ENCODE measurements at regions of chr1 and their contacts with region 1.

Region 1: DNA sequence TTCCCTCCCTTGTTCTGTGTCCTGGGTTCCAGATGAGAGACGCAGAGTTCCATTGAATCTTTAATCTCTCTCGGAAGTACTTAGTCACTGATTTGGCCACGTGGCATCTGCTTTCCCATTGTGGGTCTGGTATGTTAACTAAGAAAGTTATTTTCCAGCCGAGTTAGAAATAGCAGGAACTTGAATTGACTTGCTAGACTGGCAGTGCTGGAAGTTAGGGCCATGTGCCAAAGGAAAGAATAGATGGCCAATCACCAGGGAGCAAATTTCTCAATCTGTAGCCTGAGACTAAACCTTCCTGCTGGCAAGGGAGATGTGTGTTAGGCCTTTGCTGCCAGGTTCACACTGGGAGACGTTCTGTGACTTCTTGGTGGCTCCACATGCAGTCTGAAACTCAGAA is 24.2 kb upstream of the SLFNL1 start:
- DNase-seq: peak; percentile 57 to 94
- H3K4me3 ChIP-seq: no peak overlapping the region
- H3K27ac ChIP-seq: peak overlapping the region; percentile 76 to 88
- H3K4me1 ChIP-seq: peaks cover 6 to 35% of the 10 kb centered on the region in 2 donors
- H3K27me3 ChIP-seq: no peaks in the 10 kb centered on the region
- CTCF ChIP-seq: no peak

Region 2: GRCh38 chr1:40979233-40980067 is 66.3 kb before region 1 on chr1 and contains the start of gene CTPS1:
- intact Hi-C with region 1: loop called (anchors 5 kb)
- DNase-seq: peak; percentile 71 to 96
- H3K4me3 ChIP-seq: peak within 1 kb of the TSS; percentile 78 to 83
- H3K27ac ChIP-seq: peak within 1 kb of the TSS; percentile 96 to 98
- H3K4me1 ChIP-seq: peaks cover 7 to 30% of the 10 kb centered on the region in 2 donors
- H3K27me3 ChIP-seq: no peaks in the 10 kb centered on the region
- CTCF ChIP-seq: peak in 1 of 3 experiments; percentile 21
- total RNA-seq, gene CTPS1: 33.0 TPM

Region 3: DNA sequence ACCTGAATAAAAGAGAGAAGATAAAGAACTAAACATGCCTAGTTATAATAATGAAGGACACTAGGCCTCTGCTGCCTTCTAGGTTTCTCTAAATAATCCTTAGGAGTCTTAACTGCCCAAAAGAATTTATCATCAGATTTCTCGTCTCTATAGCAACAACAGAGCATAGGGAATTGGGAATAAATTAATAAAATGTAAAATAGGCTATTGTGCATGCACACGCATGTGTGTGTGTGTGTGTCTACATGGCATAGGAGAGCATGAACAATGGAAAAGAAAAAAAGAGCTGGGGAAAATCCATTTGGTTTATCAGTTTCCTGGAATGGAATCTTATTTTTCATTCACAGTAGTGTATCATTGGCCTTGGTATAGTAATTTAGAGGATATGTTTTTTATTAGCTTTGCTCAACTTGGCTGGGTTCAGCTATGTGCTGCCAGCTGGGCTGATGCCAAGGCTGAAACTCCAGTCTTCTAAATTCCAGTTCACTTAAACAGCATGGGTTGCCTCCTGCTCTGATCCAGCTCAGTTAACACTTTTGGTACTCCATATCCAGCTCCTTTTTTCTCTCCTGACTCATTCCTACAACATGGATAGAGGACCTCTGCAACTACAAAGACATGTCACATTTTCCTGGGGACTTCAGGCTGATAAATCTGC is 56.3 kb after region 1 on chr1:
- intact Hi-C with region 1: loop called (anchors 2 kb)
- DNase-seq: peak; percentile 18 to 96
- H3K4me3 ChIP-seq: no peak overlapping the region
- H3K27ac ChIP-seq: peak overlapping the region; percentile 46 to 69
- H3K4me1 ChIP-seq: peaks cover 18 to 39% of the 10 kb centered on the region in 2 donors
- H3K27me3 ChIP-seq: no peaks in the 10 kb centered on the region
- CTCF ChIP-seq: no peak

Region 4: GRCh38 chr1:41241782-41242341 is 196.1 kb after region 1 on chr1 and contains the start of gene SCMH1:
- intact Hi-C with region 1: loop called (anchors 2 kb)
- DNase-seq: peak in 1 of 2 donors; percentile 68
- H3K4me3 ChIP-seq: peak within 1 kb of the TSS; percentile 90 to 95
- H3K27ac ChIP-seq: peak within 1 kb of the TSS; percentile 96 to 98
- H3K4me1 ChIP-seq: peaks cover 0 to 16% of the 10 kb centered on the region in 2 donors
- H3K27me3 ChIP-seq: no peaks in the 10 kb centered on the region
- CTCF ChIP-seq: no peak
- total RNA-seq, gene SCMH1: 55.9 TPM

Measured in ascending aorta (tissue), 2 donors.